ENCODE measurements at regions of chr4 and their contacts with region 1.

Region 1: DNA sequence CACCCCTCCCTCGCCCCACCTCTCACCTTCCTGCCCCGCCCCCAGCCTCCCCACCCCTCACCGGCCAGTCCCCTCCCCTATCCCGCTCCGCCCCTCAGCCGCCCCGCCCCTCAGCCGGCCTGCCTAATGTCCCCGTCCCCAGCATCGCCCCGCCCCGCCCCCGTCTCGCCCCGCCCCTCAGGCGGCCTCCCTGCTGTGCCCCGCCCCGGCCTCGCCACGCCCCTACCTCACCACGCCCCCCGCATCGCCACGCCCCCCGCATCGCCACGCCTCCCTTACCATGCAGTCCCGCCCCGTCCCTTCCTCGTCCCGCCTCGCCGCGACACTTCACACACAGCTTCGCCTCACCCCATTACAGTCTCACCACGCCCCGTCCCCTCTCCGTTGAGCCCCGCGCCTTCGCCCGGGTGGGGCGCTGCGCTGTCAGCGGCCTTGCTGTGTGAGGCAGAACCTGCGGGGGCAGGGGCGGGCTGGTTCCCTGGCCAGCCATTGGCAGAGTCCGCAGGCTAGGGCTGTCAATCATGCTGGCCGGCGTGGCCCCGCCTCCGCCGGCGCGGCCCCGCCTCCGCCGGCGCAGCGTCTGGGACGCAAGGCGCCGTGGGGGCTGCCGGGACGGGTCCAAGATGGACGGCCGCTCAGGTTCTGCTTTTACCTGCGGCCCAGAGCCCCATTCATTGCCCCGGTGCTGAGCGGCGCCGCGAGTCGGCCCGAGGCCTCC is at the starts of genes HTT and HTT-AS:
- DNase-seq: peak; percentile 99
- ATAC-seq: peak; percentile 77
- H3K4me3 ChIP-seq: peak within 1 kb of the TSS; percentile 59 to 96 (median 76)
- H3K4me3 Mint-ChIP-seq: peak within 1 kb of the TSS; percentile 95
- H3K27ac ChIP-seq: peak within 1 kb of the TSS; percentile 72 to 83
- H3K27ac Mint-ChIP-seq: peak within 1 kb of the TSS; percentile 96
- H3K4me1 ChIP-seq: peaks cover 38 to 51% of the 10 kb centered on the region in 2 donors
- H3K4me1 Mint-ChIP-seq: peaks cover 33% of the 10 kb centered on the region
- H3K27me3 ChIP-seq: no peaks in the 10 kb centered on the region
- H3K27me3 Mint-ChIP-seq: no peaks in the 10 kb centered on the region
- CTCF ChIP-seq: no peak
- total RNA-seq, gene HTT: 182 and 195 TPM in 2 replicates
- total RNA-seq, gene HTT-AS: 0.84 TPM in 1 of 2 replicates, not detected in the other

Region 2: GRCh38 chr4:1579901-1580691 is 1494.1 kb before region 1 on chr4:
- CTCF ChIA-PET with region 1: no interaction called
- POLR2A ChIA-PET with region 1: no interaction called
- intact Hi-C with region 1: loop called (anchors 10 kb)
- DNase-seq: peak; percentile 95
- ATAC-seq: peak; percentile 79
- H3K4me3 ChIP-seq: peak overlapping the region; percentile 72 to 84 (median 76)
- H3K4me3 Mint-ChIP-seq: peak overlapping the region; percentile 85
- H3K27ac ChIP-seq: peak overlapping the region; percentile 46 to 71
- H3K27ac Mint-ChIP-seq: peak overlapping the region; percentile 83
- H3K4me1 ChIP-seq: peaks cover 0 to 4% of the 10 kb centered on the region in 2 donors
- H3K4me1 Mint-ChIP-seq: peaks cover 4% of the 10 kb centered on the region
- H3K27me3 ChIP-seq: no peaks in the 10 kb centered on the region
- H3K27me3 Mint-ChIP-seq: no peaks in the 10 kb centered on the region
- CTCF ChIP-seq: no peak

Region 3: DNA sequence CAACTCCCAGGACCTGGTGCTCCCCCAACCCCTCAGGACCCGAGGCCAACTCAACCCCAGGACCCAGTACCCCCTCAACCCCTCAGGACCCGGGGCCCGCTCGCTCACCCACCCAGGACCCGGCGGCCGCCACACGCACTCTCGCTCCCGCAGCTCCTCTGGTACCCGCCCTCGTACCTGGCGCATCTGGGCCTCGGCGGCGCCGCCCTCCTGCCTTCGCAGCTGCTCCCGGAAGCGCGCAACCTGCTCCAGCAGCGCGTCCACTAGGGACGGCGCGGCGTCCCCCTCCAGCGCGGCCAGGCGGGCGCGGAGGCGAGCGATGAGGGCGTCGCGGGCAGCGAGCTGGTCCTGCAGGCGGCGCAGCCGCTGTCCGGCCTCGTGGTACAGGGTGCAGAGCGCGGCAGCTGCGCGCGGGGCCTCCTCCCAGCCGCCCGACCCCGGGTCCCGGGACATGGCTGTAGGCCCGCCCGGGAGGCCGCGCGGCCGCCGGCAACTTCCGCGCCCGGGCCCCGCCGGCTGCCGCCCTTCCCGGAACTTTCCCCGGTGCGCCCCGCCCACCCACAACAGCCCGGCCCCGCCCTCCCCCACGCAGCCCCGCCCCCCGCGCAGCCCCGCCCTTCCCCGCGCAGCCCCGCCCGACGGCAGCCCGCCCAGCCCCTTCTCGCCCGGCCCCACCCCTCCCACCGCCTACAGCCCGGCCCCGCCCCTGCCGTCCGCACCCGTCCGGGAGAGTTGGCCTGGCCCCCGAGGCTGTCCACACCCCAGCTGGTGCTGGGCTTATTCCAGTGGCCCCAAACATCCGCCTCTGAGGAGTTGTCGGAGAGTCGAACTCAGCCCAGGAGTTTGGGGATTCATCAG is 318.2 kb before region 1 on chr4 and contains the start of gene TNIP2:
- CTCF ChIA-PET with region 1: no interaction called
- POLR2A ChIA-PET with region 1: no interaction called
- intact Hi-C with region 1: loop called (anchors 1 kb)
- DNase-seq: peak; percentile 88
- ATAC-seq: peak; percentile 86
- H3K4me3 ChIP-seq: peak within 1 kb of the TSS in 4 of 5 experiments; percentile 61 to 78 (median 68)
- H3K4me3 Mint-ChIP-seq: peak within 1 kb of the TSS; percentile 83
- H3K27ac ChIP-seq: peak within 1 kb of the TSS; percentile 38 to 83
- H3K27ac Mint-ChIP-seq: peak within 1 kb of the TSS; percentile 79
- H3K4me1 ChIP-seq: peaks cover 11 to 21% of the 10 kb centered on the region in 2 donors
- H3K4me1 Mint-ChIP-seq: peaks cover 31% of the 10 kb centered on the region
- H3K27me3 ChIP-seq: no peaks in the 10 kb centered on the region
- H3K27me3 Mint-ChIP-seq: no peaks in the 10 kb centered on the region
- CTCF ChIP-seq: peak; percentile 31
- total RNA-seq, gene TNIP2: 47.6 and 51.0 TPM in 2 replicates

Region 4: GRCh38 chr4:2843263-2843940 is 230.8 kb before region 1 on chr4 and contains the start of gene ADD1:
- CTCF ChIA-PET with region 1: no interaction called
- POLR2A ChIA-PET with region 1: no interaction called
- intact Hi-C with region 1: loop called (anchors 1 kb)
- DNase-seq: peak; percentile 99
- ATAC-seq: peak; percentile 91
- H3K4me3 ChIP-seq: peak within 1 kb of the TSS; percentile 82 to 97 (median 84)
- H3K4me3 Mint-ChIP-seq: peak within 1 kb of the TSS; percentile 92
- H3K27ac ChIP-seq: peak within 1 kb of the TSS; percentile 69 to 79
- H3K27ac Mint-ChIP-seq: peak within 1 kb of the TSS; percentile 97
- H3K4me1 ChIP-seq: peaks cover 48 to 55% of the 10 kb centered on the region in 2 donors
- H3K4me1 Mint-ChIP-seq: peaks cover 60% of the 10 kb centered on the region
- H3K27me3 ChIP-seq: no peaks in the 10 kb centered on the region
- H3K27me3 Mint-ChIP-seq: no peaks in the 10 kb centered on the region
- CTCF ChIP-seq: no peak
- total RNA-seq, gene ADD1: 383 and 417 TPM in 2 replicates

Region 5: DNA sequence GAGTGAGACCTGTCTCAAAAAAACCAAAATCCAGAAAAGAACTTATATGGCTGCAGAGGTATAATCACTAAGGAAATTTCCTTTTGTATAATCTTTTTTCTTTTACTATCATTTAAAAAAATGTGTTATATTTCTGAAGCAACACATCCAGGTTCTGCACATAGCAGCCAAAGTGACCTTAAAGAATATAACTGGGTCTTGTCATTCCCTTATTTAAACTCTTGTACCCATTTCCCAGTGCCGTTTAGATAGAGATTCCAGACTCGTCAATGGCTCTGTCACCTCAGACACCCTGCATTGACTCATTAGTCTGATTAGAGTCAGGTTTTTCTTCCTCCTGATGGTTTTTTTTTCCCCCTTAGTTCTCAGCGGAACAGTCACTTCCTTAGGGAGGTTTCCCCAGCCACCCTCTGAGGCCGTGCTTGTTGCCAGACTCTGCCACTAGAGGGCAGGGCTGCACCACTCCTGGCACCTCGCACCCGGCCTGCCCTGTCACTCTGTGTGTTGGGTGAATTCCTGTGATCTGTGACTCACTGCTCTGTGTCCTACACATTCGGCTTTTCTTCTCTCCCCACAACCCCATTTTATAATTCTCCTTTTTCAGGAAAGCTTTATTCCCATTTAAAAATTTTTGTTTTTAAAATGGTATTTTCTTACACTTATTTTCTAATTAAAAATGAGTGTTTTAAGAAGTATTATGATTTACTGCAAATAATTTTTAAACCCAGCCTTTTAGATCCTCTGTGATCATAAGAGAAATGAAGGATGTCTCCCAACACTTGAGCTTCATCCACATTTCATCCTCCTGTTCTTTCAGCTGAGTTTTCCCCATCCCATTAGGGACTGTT is 32.3 kb after region 1 on chr4:
- CTCF ChIA-PET with region 1: interaction called, 4 read pairs
- POLR2A ChIA-PET with region 1: no interaction called
- intact Hi-C with region 1: loop called (anchors 2 kb)
- DNase-seq: peak; percentile 86
- ATAC-seq: peak; percentile 99
- H3K4me3 ChIP-seq: no peak overlapping the region
- H3K4me3 Mint-ChIP-seq: no peak overlapping the region
- H3K27ac ChIP-seq: no peak overlapping the region
- H3K27ac Mint-ChIP-seq: peak overlapping the region; percentile 82
- H3K4me1 ChIP-seq: peaks cover 0 to 6% of the 10 kb centered on the region in 2 donors
- H3K4me1 Mint-ChIP-seq: peaks cover 8% of the 10 kb centered on the region
- H3K27me3 ChIP-seq: no peaks in the 10 kb centered on the region
- H3K27me3 Mint-ChIP-seq: no peaks in the 10 kb centered on the region
- CTCF ChIP-seq: peak; percentile 96

Region 6: GRCh38 chr4:3168029-3168428 is 93.8 kb after region 1 on chr4:
- CTCF ChIA-PET with region 1: no interaction called
- POLR2A ChIA-PET with region 1: no interaction called
- intact Hi-C with region 1: no loop called
- DNase-seq: no peak
- ATAC-seq: no peak
- H3K4me3 ChIP-seq: no peak overlapping the region
- H3K4me3 Mint-ChIP-seq: no peak overlapping the region
- H3K27ac ChIP-seq: no peak overlapping the region
- H3K27ac Mint-ChIP-seq: peak overlapping the region; percentile 35
- H3K4me1 ChIP-seq: no peaks in the 10 kb centered on the region
- H3K4me1 Mint-ChIP-seq: peaks cover 5% of the 10 kb centered on the region
- H3K27me3 ChIP-seq: no peaks in the 10 kb centered on the region
- H3K27me3 Mint-ChIP-seq: no peaks in the 10 kb centered on the region
- CTCF ChIP-seq: no peak

Measured in B cell (primary cell).